AG04450 (cell line): ENCODE measurements at regions of chr3 and their contacts with region 1.

Region 1: DNA sequence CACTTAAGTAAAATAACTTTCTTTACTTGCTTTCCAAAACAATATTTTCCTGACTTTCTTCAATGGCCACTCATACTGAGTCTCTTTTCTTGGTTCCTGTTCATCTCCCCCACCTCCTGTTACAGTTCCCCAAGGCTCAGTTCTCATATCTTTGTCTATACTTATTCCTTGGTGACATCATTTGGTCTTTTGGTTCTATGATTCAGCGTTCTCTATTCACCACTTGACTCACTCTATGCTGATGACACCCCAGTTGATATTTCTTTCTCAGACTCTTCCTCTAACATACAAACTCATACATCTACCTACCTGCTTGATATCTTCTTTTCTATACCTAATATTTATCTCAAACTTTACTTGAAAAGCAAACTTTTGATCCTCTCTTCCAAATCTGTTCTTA is 85.0 kb upstream of the P3H2 start:
- DNase-seq: peak; percentile 27
- H3K4me3 ChIP-seq: no peak overlapping the region
- H3K27ac ChIP-seq: no peak overlapping the region
- H3K27me3 ChIP-seq: no peaks in the 10 kb centered on the region
- CTCF ChIP-seq: no peak

Region 2: DNA sequence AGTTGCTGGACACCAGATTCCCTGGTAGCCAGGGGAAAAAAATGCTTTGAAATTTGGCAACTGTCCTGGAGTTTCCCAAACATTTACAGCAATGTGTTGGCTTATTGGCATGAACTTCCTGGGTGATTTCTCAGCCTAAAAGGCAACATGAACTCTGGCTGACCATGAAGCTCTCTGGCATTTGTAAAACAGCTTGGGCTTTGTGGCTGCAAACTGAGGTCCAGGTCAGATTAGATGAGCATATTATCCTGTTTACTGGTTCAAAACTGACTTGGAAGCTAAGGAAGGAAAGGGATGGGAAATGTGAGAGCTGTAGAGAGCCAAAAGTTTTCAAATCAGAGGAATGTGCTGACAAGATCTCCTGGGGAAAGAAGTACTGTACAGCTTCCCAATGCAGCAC is 224.1 kb before region 1 on chr3:
- CTCF ChIA-PET with region 1: interaction called, 17 read pairs
- POLR2A ChIA-PET with region 1: no interaction called
- DNase-seq: peak; percentile 76
- H3K4me3 ChIP-seq: no peak overlapping the region
- H3K27ac ChIP-seq: peak overlapping the region; percentile 40
- H3K27me3 ChIP-seq: no peaks in the 10 kb centered on the region
- CTCF ChIP-seq: no peak

Region 3: GRCh38 chr3:190188197-190188596 is 17.5 kb before region 1 on chr3:
- CTCF ChIA-PET with region 1: interaction called, 11 read pairs
- POLR2A ChIA-PET with region 1: no interaction called
- DNase-seq: no peak
- H3K4me3 ChIP-seq: no peak overlapping the region
- H3K27ac ChIP-seq: no peak overlapping the region
- H3K27me3 ChIP-seq: no peaks in the 10 kb centered on the region
- CTCF ChIP-seq: no peak